ENCODE measurements at regions of chr5 and their contacts with region 1.

Region 1: DNA sequence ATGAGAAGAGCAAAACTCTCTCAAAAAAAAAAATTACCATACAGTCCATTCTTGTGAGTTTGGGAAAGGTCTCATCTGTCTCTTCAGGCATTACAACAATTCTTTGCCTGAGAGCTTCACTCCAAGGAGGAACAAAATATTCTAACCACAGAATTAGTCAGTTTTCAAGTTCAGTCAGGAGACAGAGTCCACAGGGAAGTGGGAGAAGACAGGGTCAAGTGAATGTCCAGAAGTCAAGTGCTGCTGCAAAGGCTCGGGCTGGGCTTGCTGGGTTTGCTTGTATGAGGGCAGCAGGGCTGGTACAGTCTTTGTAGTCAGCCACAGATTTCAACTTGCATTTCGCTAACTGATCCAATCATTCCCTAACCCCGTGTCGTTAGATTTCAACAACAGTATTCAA is 17.6 kb upstream of the HEXB start:
- DNase-seq: no peak
- H3K4me3 Mint-ChIP-seq: no peak overlapping the region
- H3K27ac Mint-ChIP-seq: no peak overlapping the region
- H3K4me1 Mint-ChIP-seq: no peaks in the 10 kb centered on the region
- H3K27me3 Mint-ChIP-seq: peaks cover 2% of the 10 kb centered on the region

Region 2: DNA sequence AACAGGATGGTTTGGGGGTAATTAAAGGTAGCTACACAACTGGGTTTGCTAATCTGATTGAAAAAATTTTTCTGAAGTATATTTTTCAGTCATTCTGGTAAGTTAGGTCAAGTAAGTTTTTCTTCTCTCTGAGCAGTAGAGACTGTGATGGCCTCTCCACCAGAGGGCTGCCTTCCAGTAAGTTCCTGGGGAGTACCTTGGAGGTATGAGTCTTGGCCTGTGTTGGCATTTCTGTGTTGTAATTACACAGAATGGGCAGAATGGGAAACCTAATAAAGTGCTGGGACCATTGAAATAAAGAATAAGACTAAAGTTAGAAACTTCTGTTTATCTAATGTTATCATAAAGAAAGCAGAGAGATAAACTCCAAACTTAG is 610.6 kb before region 1 on chr5:
- CTCF ChIA-PET with region 1: no interaction called
- intact Hi-C with region 1: loop called (anchors 5 kb)
- DNase-seq: peak; percentile 5
- H3K4me3 Mint-ChIP-seq: no peak overlapping the region
- H3K27ac Mint-ChIP-seq: no peak overlapping the region
- H3K4me1 Mint-ChIP-seq: no peaks in the 10 kb centered on the region
- H3K27me3 Mint-ChIP-seq: peaks cover 6% of the 10 kb centered on the region

Measured in activated naive CD4-positive, alpha-beta T cell treated with anti-CD3 and anti-CD28 coated beads for 36 hours (primary cell).